HepG2 (cell line): ENCODE measurements at regions of chr10 and their contacts with region 1.

Region 1: GRCh38 chr10:103759100-103759781 is 96.1 kb downstream of the SH3PXD2A start:
- DNase-seq: peak; percentile 80
- ATAC-seq: peak; percentile 76
- H3K4me3 ChIP-seq: no peak overlapping the region
- H3K27ac ChIP-seq: peak overlapping the region; percentile 53
- H3K4me1 ChIP-seq: peaks cover 31% of the 10 kb centered on the region
- H3K27me3 ChIP-seq: no peaks in the 10 kb centered on the region
- CTCF ChIP-seq: no peak
- EP300 ChIP-seq: 0 out of 4 replicates have a peak, but pooled peaks of 1 of the 2 experiments have one; percentile 24
- POLR2A ChIP-seq: no peak
- RAD21 ChIP-seq: no peak

Region 2: GRCh38 chr10:103712570-103713498 is 46.4 kb before region 1 on chr10:
- CTCF ChIA-PET with region 1: no interaction called
- POLR2A ChIA-PET with region 1: no interaction called
- in situ Hi-C with region 1: no loop called
- intact Hi-C with region 1: loop called (anchors 5 kb)
- DNase-seq: peak; percentile 57
- ATAC-seq: peak; percentile 59
- H3K4me3 ChIP-seq: no peak overlapping the region
- H3K27ac ChIP-seq: peak overlapping the region; percentile 11
- H3K4me1 ChIP-seq: peaks cover 58% of the 10 kb centered on the region
- H3K27me3 ChIP-seq: no peaks in the 10 kb centered on the region
- CTCF ChIP-seq: peak; percentile 90
- EP300 ChIP-seq: no peak
- POLR2A ChIP-seq: no peak
- RAD21 ChIP-seq: peak; percentile 82

Region 3: DNA sequence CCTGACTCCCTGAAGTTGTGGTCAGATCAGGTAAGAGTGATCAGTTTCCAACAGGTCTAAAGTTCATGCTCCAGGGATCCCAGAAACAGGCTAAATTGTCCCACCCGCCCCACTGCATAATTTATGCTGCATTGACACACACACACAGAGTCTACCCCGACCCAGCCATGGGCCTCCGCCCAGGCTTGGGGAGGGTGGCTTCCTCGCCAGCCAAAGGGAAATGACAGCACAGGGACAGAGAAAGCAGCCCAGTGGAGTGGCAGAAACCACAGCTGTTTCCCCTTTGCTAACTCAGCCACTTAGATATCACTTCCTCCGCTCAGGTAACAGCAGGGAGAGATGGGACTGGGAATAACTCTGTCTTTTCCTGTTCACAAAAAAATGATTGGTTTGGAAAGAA is 86.7 kb after region 1 on chr10:
- CTCF ChIA-PET with region 1: no interaction called
- POLR2A ChIA-PET with region 1: no interaction called
- in situ Hi-C with region 1: no loop called
- intact Hi-C with region 1: no loop called
- DNase-seq: no peak
- ATAC-seq: peak; percentile 13; the same call in 1 of the 3 replicates
- H3K4me3 ChIP-seq: no peak overlapping the region
- H3K27ac ChIP-seq: no peak overlapping the region
- H3K4me1 ChIP-seq: peaks cover 90% of the 10 kb centered on the region
- H3K27me3 ChIP-seq: no peaks in the 10 kb centered on the region
- CTCF ChIP-seq: no peak
- EP300 ChIP-seq: no peak
- POLR2A ChIP-seq: no peak
- RAD21 ChIP-seq: no peak

Region 4: DNA sequence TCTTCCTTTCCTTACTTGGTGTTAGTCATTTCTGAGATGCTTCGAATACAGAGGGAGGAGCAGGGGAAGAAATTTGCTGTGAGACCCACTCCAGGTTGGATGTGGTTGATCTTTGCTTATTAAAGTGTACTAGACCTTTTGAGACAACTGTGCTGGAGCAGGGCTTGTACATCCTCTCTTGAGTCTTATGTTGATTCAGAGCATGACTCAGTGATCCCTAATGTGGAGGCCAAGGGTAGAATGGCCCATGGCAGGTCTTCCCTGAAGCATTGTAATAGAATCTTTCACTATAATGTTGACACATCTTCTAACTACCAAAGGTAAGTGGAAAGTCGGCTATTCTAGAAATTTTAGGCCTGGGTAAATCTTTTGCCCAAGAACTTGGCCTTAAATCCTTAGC is 345.7 kb after region 1 on chr10:
- CTCF ChIA-PET with region 1: no interaction called
- POLR2A ChIA-PET with region 1: no interaction called
- in situ Hi-C with region 1: no loop called
- intact Hi-C with region 1: no loop called
- DNase-seq: no peak
- ATAC-seq: no peak
- H3K4me3 ChIP-seq: no peak overlapping the region
- H3K27ac ChIP-seq: no peak overlapping the region
- H3K4me1 ChIP-seq: peaks cover 6% of the 10 kb centered on the region
- H3K27me3 ChIP-seq: no peaks in the 10 kb centered on the region; a peak in 1 of 5 replicates
- CTCF ChIP-seq: no peak
- EP300 ChIP-seq: no peak
- POLR2A ChIP-seq: no peak
- RAD21 ChIP-seq: no peak